Breast epithelium (tissue), 4 donors: ENCODE measurements at regions of chr6 and their contacts with region 1.

Region 1: GRCh38 chr6:139943391-139943790 is 568.9 kb upstream of the CITED2 start:
- DNase-seq: no peak
- H3K4me3 ChIP-seq: no peak overlapping the region
- H3K27ac ChIP-seq: no peak overlapping the region
- H3K4me1 ChIP-seq: no peaks in the 10 kb centered on the region
- H3K27me3 ChIP-seq: no peaks in the 10 kb centered on the region
- CTCF ChIP-seq: no peak
- POLR2A ChIP-seq: no peak

Region 2: GRCh38 chr6:138673346-138674014 is 1269.9 kb before region 1 on chr6:
- intact Hi-C with region 1: no loop called
- DNase-seq: no peak
- H3K4me3 ChIP-seq: no peak overlapping the region
- H3K27ac ChIP-seq: no peak overlapping the region
- H3K4me1 ChIP-seq: no peaks in the 10 kb centered on the region
- H3K27me3 ChIP-seq: no peaks in the 10 kb centered on the region
- CTCF ChIP-seq: no peak
- POLR2A ChIP-seq: no peak

Region 3: DNA sequence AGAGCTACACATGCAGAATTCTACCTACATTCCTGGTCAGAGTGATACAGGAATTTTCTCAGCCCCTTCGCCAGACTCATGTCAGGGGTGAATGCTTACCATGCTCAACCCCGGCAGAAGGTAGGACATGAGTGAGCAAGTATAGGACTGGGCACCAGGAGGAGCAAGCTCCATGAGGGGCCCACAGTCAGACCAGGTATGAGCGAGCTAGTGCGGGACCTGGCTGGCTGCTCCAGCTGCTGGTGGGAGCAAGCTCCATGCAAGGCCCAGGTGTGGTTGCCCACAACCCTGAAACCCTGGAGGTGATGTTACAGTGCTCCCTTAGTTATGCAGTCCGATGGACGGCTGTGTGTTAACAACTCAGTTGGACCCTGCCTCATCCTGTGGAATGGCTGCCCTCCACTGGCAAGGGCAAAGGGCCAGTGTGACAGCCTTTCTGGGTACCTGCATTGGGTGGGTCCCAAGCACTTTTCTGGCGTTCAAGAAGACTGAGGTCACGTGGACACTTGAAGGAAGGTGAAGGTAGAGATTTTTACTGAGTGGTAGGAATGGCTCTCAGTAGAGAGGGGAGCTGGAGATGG is 65.5 kb before region 1 on chr6:
- intact Hi-C with region 1: loop called (anchors 2 kb)
- DNase-seq: no peak
- H3K4me3 ChIP-seq: no peak overlapping the region
- H3K27ac ChIP-seq: no peak overlapping the region
- H3K4me1 ChIP-seq: no peaks in the 10 kb centered on the region
- H3K27me3 ChIP-seq: no peaks in the 10 kb centered on the region
- CTCF ChIP-seq: no peak
- POLR2A ChIP-seq: no peak

Region 4: GRCh38 chr6:141624301-141624700 is 1680.9 kb after region 1 on chr6:
- intact Hi-C with region 1: no loop called
- DNase-seq: no peak
- H3K4me3 ChIP-seq: no peak overlapping the region
- H3K27ac ChIP-seq: no peak overlapping the region
- H3K4me1 ChIP-seq: no peaks in the 10 kb centered on the region
- H3K27me3 ChIP-seq: no peaks in the 10 kb centered on the region
- CTCF ChIP-seq: no peak
- POLR2A ChIP-seq: no peak